AG04450 (cell line): ENCODE measurements at regions of chr4 and their contacts with region 1.

Region 1: GRCh38 chr4:184474263-184475095 is at the start of gene IRF2:
- DNase-seq: peak; percentile 96
- H3K4me3 ChIP-seq: peak within 1 kb of the TSS; percentile 97
- H3K27ac ChIP-seq: peak within 1 kb of the TSS; percentile 94
- H3K27me3 ChIP-seq: no peaks in the 10 kb centered on the region
- CTCF ChIP-seq: no peak
- polyA plus RNA-seq, gene IRF2: 31.4 and 39.2 TPM in 2 replicates

Region 2: GRCh38 chr4:184514121-184514988 is 39.9 kb after region 1 on chr4:
- CTCF ChIA-PET with region 1: no interaction called
- POLR2A ChIA-PET with region 1: interaction called, 11 read pairs
- DNase-seq: peak; percentile 78
- H3K4me3 ChIP-seq: peak overlapping the region; percentile 52
- H3K27ac ChIP-seq: peak overlapping the region; percentile 85
- H3K27me3 ChIP-seq: no peaks in the 10 kb centered on the region
- CTCF ChIP-seq: no peak